Heart left ventricle (tissue), 16 donors: ENCODE measurements at regions of chr12 and their contacts with region 1.

Region 1: DNA sequence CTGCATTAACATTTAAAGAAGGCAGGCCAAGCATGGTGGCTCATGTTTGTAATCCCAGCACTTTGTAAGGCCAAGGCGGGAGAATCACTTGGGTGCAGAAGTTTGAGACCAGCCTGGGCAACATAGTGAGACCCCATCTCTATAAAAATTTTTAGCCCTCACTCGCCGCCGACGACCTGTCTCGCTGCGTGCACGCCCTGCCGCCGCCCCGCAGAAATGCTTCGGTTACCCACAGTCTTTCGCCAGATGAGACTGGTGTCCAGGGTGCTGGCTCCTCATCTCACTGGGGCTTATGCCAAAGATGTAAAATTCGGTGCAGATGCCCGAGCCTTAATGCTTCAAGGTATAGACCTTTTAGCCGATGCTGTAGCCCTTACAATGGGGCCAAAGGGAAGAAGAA is 10.8 kb upstream of the RBMS2 start:
- DNase-seq: no peak
- ATAC-seq: no peak
- H3K4me3 ChIP-seq: no peak overlapping the region
- H3K27ac ChIP-seq: no peak overlapping the region
- H3K4me1 ChIP-seq: peaks cover 0 to 7% (median 0%) of the 10 kb centered on the region in 12 donors
- H3K27me3 ChIP-seq: no peaks in the 10 kb centered on the region
- CTCF ChIP-seq: no peak
- POLR2A ChIP-seq: no peak

Region 2: DNA sequence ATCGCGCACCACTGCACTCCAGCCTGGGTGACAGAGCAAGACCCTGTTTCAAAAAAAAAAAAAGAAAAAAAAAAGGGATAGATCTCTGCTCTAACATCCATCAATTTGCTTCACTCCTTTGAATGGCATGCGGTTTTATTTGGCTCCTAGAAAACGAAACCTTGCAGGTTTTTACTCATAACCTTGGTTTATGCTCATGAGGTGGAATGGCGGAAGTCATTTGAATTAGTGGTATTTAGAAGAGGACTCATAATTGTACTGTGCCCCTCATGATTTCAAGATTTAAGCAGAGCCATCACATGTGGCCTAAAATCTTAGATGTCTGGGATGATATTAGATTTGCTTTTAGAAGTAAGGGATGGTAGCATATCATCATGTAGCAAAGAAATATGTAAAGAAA is 40.3 kb after region 1 on chr12:
- intact Hi-C with region 1: no loop called
- DNase-seq: no peak
- ATAC-seq: no peak
- H3K4me3 ChIP-seq: no peak overlapping the region
- H3K27ac ChIP-seq: no peak overlapping the region
- H3K4me1 ChIP-seq: peaks cover 0 to 24% (median 2%) of the 10 kb centered on the region in 12 donors
- H3K27me3 ChIP-seq: no peaks in the 10 kb centered on the region
- CTCF ChIP-seq: no peak
- POLR2A ChIP-seq: no peak

Region 3: GRCh38 chr12:56571126-56571525 is 60.3 kb after region 1 on chr12:
- intact Hi-C with region 1: loop called in 8 of 10 experiments (anchors 1 to 2 kb)
- DNase-seq: peak in 1 of 5 donors; percentile 20
- ATAC-seq: peak in 3 of 4 donors; percentile 29 to 43 (median 31)
- H3K4me3 ChIP-seq: no peak overlapping the region
- H3K27ac ChIP-seq: peak overlapping the region; percentile 4 to 93 (median 54)
- H3K4me1 ChIP-seq: peaks cover 4 to 55% (median 31%) of the 10 kb centered on the region in 12 donors
- H3K27me3 ChIP-seq: no peaks in the 10 kb centered on the region
- CTCF ChIP-seq: no peak
- POLR2A ChIP-seq: no peak

Region 4: DNA sequence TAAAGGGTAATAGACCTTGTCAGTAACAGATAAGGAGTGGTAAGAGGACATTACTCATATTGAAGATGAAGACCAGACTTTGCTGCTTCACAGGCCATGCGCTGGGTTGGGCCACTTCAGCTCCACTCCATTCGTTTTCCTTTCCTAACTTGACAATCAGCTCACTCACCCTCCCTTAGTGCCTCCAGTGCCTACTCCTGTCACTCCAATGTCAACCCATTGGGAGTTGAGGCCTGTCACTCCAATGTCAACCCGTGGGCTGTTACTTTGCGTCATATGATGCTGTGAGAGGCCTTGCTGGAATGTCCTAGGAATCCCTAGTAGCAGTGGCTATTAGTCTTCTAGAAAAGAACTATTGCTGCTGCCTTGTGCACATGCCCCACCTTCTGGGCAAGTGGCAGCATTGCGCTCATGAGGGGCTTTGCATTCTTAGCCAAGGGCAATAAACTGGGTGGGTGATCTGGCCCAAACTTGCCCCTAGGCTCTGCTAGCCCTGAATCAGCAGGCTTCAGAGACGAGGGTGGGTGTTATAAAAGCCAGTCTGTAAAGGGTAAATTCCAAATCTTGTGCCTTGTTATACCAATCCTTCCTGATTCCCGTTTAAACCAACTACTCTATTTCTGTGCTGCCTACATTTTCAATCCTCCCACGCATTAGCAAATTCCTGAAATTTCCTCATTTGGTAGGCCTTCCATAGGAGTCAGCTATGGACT is 83.3 kb after region 1 on chr12:
- intact Hi-C with region 1: loop called in 3 of 10 experiments (anchors 5 kb)
- DNase-seq: peak in 1 of 5 donors; percentile 42
- ATAC-seq: peak; percentile 48 to 79 (median 66)
- H3K4me3 ChIP-seq: no peak overlapping the region
- H3K27ac ChIP-seq: peak overlapping the region in 10 of 12 donors; percentile 10 to 59 (median 30)
- H3K4me1 ChIP-seq: peaks cover 0 to 23% (median 7%) of the 10 kb centered on the region in 12 donors
- H3K27me3 ChIP-seq: no peaks in the 10 kb centered on the region
- CTCF ChIP-seq: peak; percentile 58 to 79 (median 72)
- POLR2A ChIP-seq: no peak

Region 5: DNA sequence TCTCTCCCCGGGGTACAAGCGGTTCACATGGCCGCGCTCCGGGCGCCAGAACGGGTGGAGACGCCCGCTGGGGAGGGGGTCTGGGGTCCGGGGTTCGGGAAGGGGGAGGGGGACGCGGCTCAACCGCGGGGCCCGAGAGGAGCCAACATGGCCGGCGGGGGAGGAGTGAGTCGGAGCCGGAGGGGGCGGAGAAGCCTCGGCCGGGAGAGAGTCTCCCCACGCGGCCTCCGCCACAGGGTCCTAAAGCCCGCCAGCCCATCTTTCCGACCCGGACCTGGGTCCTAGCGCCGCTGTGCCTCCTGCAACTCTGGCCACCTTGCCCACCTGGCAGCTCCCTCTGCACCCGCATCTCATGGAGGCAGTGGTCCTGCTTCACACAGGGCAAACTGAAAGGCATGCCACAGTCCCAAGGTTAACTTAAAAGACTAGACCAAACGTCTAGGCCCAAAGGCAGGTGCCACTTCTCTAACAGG is 119.4 kb after region 1 on chr12 and contains the start of gene BAZ2A:
- intact Hi-C with region 1: loop called in 4 of 10 experiments (anchors 5 kb)
- DNase-seq: peak; percentile 91 to 93 (median 93)
- ATAC-seq: peak; percentile 79 to 90 (median 87)
- H3K4me3 ChIP-seq: peak within 1 kb of the TSS; percentile 80 to 100 (median 98)
- H3K27ac ChIP-seq: peak within 1 kb of the TSS; percentile 84 to 98 (median 94)
- H3K4me1 ChIP-seq: peaks cover 18 to 78% (median 63%) of the 10 kb centered on the region in 12 donors
- H3K27me3 ChIP-seq: no peaks in the 10 kb centered on the region
- CTCF ChIP-seq: no peak
- POLR2A ChIP-seq: no peak
- total RNA-seq, gene BAZ2A: 28.0 to 71.5 (median 44.5) TPM